Activated naive CD4-positive, alpha-beta T cell treated with anti-CD3 and anti-CD28 coated beads for 36 hours (primary cell): ENCODE measurements at regions of chr12 and their contacts with region 1.

Region 1: GRCh38 chr12:44930972-44931600 is 55.0 kb upstream of the NELL2 start:
- DNase-seq: no peak
- H3K4me3 Mint-ChIP-seq: no peak overlapping the region
- H3K27ac Mint-ChIP-seq: no peak overlapping the region
- H3K4me1 Mint-ChIP-seq: no peaks in the 10 kb centered on the region
- H3K27me3 Mint-ChIP-seq: no peaks in the 10 kb centered on the region

Region 2: GRCh38 chr12:43957732-43958372 is 973.2 kb before region 1 on chr12:
- CTCF ChIA-PET with region 1: interaction called, 4 read pairs
- intact Hi-C with region 1: loop called (anchors 1 kb)
- DNase-seq: peak; percentile 54
- H3K4me3 Mint-ChIP-seq: no peak overlapping the region
- H3K27ac Mint-ChIP-seq: no peak overlapping the region
- H3K4me1 Mint-ChIP-seq: peaks cover 2% of the 10 kb centered on the region
- H3K27me3 Mint-ChIP-seq: no peaks in the 10 kb centered on the region

Region 3: GRCh38 chr12:44317651-44318126 is 613.4 kb before region 1 on chr12:
- CTCF ChIA-PET with region 1: no interaction called
- intact Hi-C with region 1: loop called (anchors 1 kb)
- DNase-seq: no peak
- H3K4me3 Mint-ChIP-seq: no peak overlapping the region
- H3K27ac Mint-ChIP-seq: no peak overlapping the region
- H3K4me1 Mint-ChIP-seq: no peaks in the 10 kb centered on the region
- H3K27me3 Mint-ChIP-seq: no peaks in the 10 kb centered on the region

Region 4: GRCh38 chr12:44812062-44812461 is 119.0 kb before region 1 on chr12:
- CTCF ChIA-PET with region 1: interaction called, 33 read pairs
- intact Hi-C with region 1: loop called (anchors 1 kb)
- DNase-seq: peak; percentile 67
- H3K4me3 Mint-ChIP-seq: no peak overlapping the region
- H3K27ac Mint-ChIP-seq: peak overlapping the region; percentile 71
- H3K4me1 Mint-ChIP-seq: peaks cover 42% of the 10 kb centered on the region
- H3K27me3 Mint-ChIP-seq: no peaks in the 10 kb centered on the region

Region 5: DNA sequence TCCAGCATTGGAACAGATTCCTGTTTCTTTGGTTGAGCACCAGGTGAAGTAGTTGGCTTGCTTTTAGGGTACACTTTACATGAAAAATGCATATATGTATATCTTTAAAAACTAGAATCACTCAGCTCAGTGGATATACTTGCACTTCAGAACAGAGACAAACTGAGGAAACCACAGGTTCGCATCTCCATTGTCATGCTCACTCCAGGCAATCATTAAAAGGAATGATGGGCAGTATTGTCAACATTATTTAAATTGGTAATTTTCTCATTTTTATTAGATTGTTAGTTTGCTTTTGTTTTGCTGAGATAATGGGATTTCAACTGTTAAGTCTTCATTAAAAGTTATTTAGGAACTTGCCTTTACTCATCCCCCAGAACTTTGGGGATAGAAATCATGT is 16.1 kb after region 1 on chr12:
- CTCF ChIA-PET with region 1: interaction called, 23 read pairs
- intact Hi-C with region 1: no loop called
- DNase-seq: no peak
- H3K4me3 Mint-ChIP-seq: no peak overlapping the region
- H3K27ac Mint-ChIP-seq: no peak overlapping the region
- H3K4me1 Mint-ChIP-seq: peaks cover 2% of the 10 kb centered on the region
- H3K27me3 Mint-ChIP-seq: peaks cover 4% of the 10 kb centered on the region